Lower leg skin (tissue), 4 donors: ENCODE measurements at regions of chr14 and their contacts with region 1.

Region 1: GRCh38 chr14:83217492-83217891 is 1683.8 kb upstream of the SEL1L start:
- DNase-seq: peak; percentile 63 to 87
- H3K4me3 ChIP-seq: no peak overlapping the region
- CTCF ChIP-seq: no peak
- POLR2A ChIP-seq: no peak

Region 2: GRCh38 chr14:82963723-82964122 is 253.8 kb before region 1 on chr14:
- intact Hi-C with region 1: loop called (anchors 10 kb)
- DNase-seq: no peak
- H3K4me3 ChIP-seq: no peak overlapping the region
- CTCF ChIP-seq: no peak
- POLR2A ChIP-seq: no peak